ENCODE measurements at regions of chr7 and their contacts with region 1.

Region 1: GRCh38 chr7:106056513-106057203 is 55.5 kb downstream of the SYPL1 start:
- DNase-seq: peak; percentile 66 to 81
- H3K4me3 ChIP-seq: no peak overlapping the region
- H3K27ac ChIP-seq: no peak overlapping the region
- H3K4me1 ChIP-seq: peaks cover 0 to 13% (median 2%) of the 10 kb centered on the region in 4 donors
- H3K27me3 ChIP-seq: no peaks in the 10 kb centered on the region
- CTCF ChIP-seq: peak; percentile 89 to 92

Region 2: DNA sequence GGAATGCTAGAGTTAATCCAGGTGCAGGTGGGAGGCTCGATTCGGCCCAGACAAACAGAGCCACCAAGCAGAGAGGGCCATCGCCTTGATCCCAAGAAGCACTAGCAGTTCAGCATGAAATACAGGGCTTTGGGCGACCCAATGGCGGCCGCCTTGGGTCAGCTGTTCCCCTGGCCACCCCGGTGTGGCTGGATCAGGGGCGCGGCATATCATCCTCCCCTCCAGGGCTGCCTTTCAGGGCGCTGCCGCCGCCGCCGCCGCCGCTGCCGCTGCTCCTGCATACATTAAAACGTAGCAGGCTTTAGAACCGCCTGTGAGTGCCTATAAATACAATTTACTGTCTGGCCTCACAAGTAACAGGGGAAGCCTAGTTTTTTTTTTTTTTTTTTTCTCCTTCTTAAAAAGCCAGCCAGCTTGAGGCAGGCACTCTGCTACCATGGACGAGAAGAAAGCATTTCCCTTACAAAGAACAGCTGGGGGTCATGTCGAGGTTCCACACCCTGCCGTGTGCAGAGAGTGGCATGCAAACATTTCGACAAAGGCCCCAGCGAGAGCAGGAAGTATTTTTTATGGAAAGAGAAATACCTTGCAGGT is 417.7 kb before region 1 on chr7:
- intact Hi-C with region 1: no loop called
- DNase-seq: no peak
- H3K4me3 ChIP-seq: no peak overlapping the region
- H3K27ac ChIP-seq: no peak overlapping the region
- H3K4me1 ChIP-seq: no peaks in the 10 kb centered on the region
- H3K27me3 ChIP-seq: no peaks in the 10 kb centered on the region
- CTCF ChIP-seq: no peak

Region 3: GRCh38 chr7:105924945-105925344 is 131.7 kb before region 1 on chr7:
- intact Hi-C with region 1: no loop called
- DNase-seq: no peak
- H3K4me3 ChIP-seq: no peak overlapping the region
- H3K27ac ChIP-seq: no peak overlapping the region
- H3K4me1 ChIP-seq: no peaks in the 10 kb centered on the region
- H3K27me3 ChIP-seq: no peaks in the 10 kb centered on the region
- CTCF ChIP-seq: no peak

Region 4: DNA sequence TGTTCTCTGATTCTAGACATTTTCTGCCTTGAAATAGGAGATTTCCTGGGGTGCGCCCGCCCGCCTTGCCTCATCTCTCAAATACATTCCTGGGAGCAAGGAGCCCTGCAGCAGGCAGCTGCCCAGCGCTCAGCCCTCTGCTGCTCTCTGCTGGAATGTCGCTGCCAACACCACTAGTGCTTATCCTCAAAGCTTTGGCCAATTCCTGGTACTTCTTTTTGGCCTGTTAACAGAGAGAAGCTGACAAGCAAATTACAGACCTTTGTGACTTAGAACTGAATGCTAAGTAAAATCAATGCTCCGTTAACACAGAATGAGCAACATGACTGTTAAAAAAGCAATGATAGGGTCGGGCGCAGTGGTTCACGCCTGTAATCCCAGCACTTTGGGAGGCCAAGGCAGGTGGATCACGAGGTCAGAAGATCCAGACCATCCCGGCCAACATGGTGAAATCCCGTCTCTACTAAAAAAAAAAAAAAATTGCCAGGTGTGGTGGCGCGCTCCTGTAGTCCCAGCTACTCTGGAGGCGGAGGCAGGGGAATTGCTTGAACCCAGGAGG is 97.3 kb after region 1 on chr7:
- intact Hi-C with region 1: loop called (anchors 1 kb)
- DNase-seq: peak; percentile 76 to 90
- H3K4me3 ChIP-seq: no peak overlapping the region
- H3K27ac ChIP-seq: no peak overlapping the region
- H3K4me1 ChIP-seq: peaks cover 0 to 14% (median 6%) of the 10 kb centered on the region in 4 donors
- H3K27me3 ChIP-seq: no peaks in the 10 kb centered on the region
- CTCF ChIP-seq: peak; percentile 96 to 97

Region 5: GRCh38 chr7:106187613-106188350 is 131.1 kb after region 1 on chr7:
- intact Hi-C with region 1: no loop called
- DNase-seq: no peak
- H3K4me3 ChIP-seq: no peak overlapping the region
- H3K27ac ChIP-seq: no peak overlapping the region
- H3K4me1 ChIP-seq: peaks cover 0 to 7% (median 0%) of the 10 kb centered on the region in 4 donors
- H3K27me3 ChIP-seq: no peaks in the 10 kb centered on the region
- CTCF ChIP-seq: no peak

Region 6: GRCh38 chr7:106915873-106916272 is 859.2 kb after region 1 on chr7:
- intact Hi-C with region 1: no loop called
- DNase-seq: no peak
- H3K4me3 ChIP-seq: no peak overlapping the region
- H3K27ac ChIP-seq: no peak overlapping the region
- H3K4me1 ChIP-seq: no peaks in the 10 kb centered on the region
- H3K27me3 ChIP-seq: no peaks in the 10 kb centered on the region
- CTCF ChIP-seq: no peak